ENCODE measurements at regions of chr15 and their contacts with region 1.

Region 1: DNA sequence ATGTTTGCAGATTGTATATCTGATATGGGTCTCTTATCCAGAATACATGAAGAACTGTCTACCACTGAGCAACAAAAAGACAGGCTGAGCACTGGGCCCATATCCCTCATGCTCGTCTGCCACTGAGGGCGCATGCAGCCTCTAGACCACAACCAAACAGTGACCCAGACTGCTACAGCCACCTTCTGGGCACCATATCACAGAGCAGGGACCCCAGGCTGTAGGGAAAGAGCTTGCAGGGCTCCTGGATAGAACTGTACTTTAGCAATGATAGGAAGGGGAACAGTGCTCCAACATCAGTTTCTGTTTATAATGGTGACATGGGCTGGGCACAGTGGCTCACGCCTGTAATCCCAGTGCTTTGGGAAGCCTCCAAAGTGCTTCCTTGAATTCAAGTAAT is 40.2 kb upstream of the TMEM87A start:
- DNase-seq: no peak
- ATAC-seq: peak in 1 of 2 donors; percentile 14
- H3K4me3 ChIP-seq: no peak overlapping the region
- H3K27ac ChIP-seq: peak overlapping the region in 2 of 4 donors; percentile 3 to 24
- H3K4me1 ChIP-seq: peaks cover 0 to 23% of the 10 kb centered on the region in 2 donors
- H3K27me3 ChIP-seq: no peaks in the 10 kb centered on the region
- CTCF ChIP-seq: no peak
- POLR2A ChIP-seq: no peak

Region 2: DNA sequence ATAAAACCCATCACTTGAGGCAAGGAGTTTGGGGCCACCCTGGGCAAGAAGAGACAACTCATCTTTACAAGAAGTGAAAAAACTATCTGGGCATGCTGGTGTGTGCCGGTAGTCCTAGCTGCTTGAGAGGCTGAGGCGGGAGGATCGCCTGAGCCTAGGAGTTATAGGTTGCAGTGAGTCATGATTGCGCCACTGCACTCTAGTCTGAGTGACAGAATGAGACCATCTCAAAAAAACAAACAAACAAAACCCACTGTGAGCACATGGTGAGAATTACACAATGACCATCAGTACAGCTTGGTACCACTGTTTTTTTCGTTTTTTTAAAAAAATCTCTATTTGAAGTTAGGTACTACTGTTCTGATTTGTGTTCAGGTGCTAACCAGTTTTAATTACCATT is 119.0 kb before region 1 on chr15:
- in situ Hi-C with region 1: no loop called
- intact Hi-C with region 1: loop called (anchors 10 kb)
- DNase-seq: peak in 1 of 2 donors; percentile 14
- ATAC-seq: peak in 1 of 2 donors; percentile 41
- H3K4me3 ChIP-seq: no peak overlapping the region
- H3K27ac ChIP-seq: no peak overlapping the region
- H3K4me1 ChIP-seq: no peaks in the 10 kb centered on the region
- H3K27me3 ChIP-seq: no peaks in the 10 kb centered on the region
- CTCF ChIP-seq: no peak
- POLR2A ChIP-seq: no peak

Region 3: DNA sequence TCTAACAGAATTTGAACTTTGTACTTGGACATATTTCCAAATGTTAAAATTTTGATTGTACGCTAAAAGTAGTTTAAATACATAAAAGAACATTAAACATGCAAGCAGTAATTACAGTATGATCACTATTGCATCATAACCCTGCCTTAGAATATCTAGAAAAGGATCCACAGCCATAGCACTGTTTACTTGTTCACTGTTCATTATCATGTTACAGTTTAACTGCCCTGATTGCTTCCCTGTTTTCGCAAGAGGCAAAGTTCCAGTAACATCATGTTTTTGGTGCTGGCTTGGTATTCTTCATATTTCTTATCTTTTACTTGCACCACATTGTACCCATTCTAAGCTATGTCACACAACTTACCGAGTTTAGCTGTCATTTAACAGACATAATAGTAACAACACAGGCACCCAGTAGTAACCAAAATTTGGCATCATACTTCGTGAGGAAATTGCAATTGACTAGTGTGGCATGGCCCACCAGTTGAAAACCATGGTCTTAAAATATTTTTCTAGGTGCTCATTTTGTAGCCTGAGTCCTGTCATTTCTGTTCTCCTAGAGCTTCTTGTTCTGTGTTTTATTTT is 26.9 kb before region 1 on chr15:
- in situ Hi-C with region 1: no loop called
- intact Hi-C with region 1: no loop called
- DNase-seq: no peak
- ATAC-seq: no peak
- H3K4me3 ChIP-seq: no peak overlapping the region
- H3K27ac ChIP-seq: peak overlapping the region in 1 of 4 donors; percentile 3
- H3K4me1 ChIP-seq: peaks cover 14 to 34% of the 10 kb centered on the region in 2 donors
- H3K27me3 ChIP-seq: no peaks in the 10 kb centered on the region
- CTCF ChIP-seq: no peak
- POLR2A ChIP-seq: no peak

Region 4: DNA sequence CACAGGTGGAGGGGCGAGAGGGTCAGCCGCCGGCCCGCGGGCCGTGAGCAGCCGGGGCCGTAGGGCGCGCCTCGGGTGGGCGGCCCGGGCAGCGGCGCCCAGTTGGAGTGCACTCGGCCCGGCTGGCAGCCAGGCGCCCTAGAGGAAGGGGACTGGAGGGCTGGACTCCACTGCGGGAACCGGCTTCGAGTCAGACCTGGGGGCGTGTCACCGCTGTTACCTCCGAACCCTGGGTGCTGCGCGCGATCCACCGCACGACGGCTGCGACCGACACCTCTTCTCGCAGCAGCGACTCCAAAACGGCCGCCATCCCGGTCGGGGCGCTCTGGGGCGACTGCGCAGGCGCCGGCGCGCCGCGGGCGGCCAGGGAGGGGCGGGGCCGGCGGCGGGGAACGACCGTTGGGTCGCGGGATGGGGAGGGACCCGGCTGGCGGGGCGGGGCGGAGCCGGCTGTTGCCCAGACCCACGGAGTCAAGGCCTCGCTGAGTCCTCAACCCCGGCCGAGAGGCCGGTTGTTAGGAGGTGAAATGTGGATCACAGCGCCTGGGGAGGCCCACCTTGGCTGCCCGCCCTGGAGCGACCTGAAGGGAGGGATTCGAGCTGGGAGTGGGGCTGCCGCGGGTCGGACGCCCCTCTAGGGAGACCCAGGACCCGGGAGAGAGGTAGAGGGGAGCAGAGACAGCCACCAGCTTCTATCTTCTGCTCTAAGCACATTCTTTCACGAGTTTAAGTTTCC is 423.5 kb after region 1 on chr15 and contains the start of gene CDAN1:
- in situ Hi-C with region 1: no loop called
- intact Hi-C with region 1: loop called (anchors 10 kb)
- DNase-seq: peak; percentile 83 to 89
- ATAC-seq: peak; percentile 94
- H3K4me3 ChIP-seq: peak within 1 kb of the TSS; percentile 61 to 90 (median 72)
- H3K27ac ChIP-seq: peak within 1 kb of the TSS; percentile 85 to 96 (median 93)
- H3K4me1 ChIP-seq: peaks cover 13 to 16% of the 10 kb centered on the region in 2 donors
- H3K27me3 ChIP-seq: no peaks in the 10 kb centered on the region
- CTCF ChIP-seq: peak in 1 of 5 experiments; percentile 20
- POLR2A ChIP-seq: peak; percentile 74 to 75
- total RNA-seq, gene CDAN1: 4.2 to 5.9 (median 5.1) TPM